Astrocyte of the cerebellum (primary cell): ENCODE measurements at regions of chr16 and their contacts with region 1.

Region 1: DNA sequence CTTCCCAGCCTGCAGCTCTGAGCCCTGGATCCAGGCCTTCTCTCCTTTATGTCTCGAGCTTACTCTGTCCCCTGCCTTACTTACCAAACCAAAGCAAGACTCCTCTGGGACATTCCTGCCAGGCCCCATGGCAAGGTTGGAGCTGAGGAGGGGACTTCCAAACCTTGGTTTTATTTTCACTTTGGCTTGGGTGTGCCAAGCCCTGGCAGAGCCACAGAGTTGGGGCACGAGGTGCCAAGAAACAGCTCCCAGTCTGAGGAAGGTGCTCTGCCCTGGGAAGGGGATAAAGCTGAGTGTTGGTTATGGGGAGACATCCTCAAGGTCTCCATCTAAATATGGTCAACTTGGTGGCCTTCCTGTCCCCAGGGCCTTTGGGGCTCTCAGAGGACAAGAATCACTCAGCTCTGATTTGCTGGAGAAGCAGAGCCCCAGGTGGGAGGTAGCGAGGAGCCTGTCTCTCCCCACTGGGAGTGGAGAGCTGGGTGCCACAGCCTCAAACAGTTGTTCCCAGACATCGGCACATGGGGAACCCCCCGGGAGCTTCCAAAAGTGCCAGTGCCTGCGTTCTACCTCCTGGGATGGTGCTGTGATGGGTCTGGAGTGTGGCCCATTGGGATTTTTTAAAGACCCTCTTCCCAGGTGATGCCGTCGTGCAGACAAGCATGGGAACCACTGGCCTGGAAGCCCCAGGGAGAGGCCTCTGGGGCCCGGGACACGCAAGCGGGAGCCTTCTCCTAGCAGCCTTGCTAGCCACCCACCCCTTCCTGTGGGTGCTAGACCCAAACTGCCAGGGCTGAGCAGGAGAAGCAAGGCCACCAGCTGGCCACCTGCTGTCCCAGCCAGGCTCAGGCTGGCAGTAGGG is 10.3 kb downstream of the NLRC5 start:
- DNase-seq: no peak
- H3K4me3 ChIP-seq: no peak overlapping the region
- CTCF ChIP-seq: no peak

Region 2: DNA sequence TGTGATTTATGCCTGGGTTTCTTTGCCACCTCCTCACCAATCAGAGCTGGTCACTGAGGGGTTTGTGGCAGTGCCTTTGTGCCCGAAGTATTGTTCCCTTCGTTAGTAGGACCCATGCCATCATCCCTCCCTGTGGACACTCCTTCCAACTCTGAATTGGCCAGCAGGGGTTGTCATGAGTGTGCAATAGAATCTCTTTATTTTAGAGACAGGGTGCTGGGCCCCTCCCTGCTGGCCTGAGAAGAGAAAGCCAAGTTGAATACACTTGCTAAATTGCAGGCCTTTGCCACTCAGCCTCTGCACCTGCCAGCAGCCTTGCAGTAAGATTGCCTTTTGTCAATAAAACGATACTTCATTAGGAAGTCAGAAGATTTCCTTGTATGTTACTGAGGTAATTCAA is 175.3 kb before region 1 on chr16:
- in situ Hi-C with region 1: no loop called
- DNase-seq: no peak
- H3K4me3 ChIP-seq: no peak overlapping the region
- CTCF ChIP-seq: peak; percentile 40

Region 3: DNA sequence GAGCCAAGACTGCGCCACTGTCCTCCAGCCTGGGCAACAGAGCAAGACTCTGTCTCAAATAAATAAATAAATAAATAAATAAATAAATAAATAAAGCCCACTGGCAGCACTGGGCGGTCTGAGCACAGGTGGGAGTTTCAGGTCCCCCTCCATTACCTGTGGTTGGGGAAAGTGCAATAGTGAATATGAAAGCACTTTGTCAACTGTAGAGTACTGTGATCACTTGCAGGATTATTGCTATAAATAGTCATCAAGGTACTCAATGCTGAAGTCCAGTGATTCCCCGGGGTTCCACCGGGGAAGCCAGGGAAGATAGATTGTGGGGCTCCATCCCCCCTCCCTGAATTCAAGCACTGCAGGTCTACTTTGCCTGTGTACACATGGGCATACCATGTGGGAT is 50.0 kb after region 1 on chr16:
- in situ Hi-C with region 1: loop called (anchors 5 kb)
- DNase-seq: no peak
- H3K4me3 ChIP-seq: no peak overlapping the region
- CTCF ChIP-seq: no peak